Heart left ventricle (tissue), 16 donors: ENCODE measurements at regions of chr15 and their contacts with region 1.

Region 1: GRCh38 chr15:65832549-65833364 is 36.5 kb upstream of the RAB11A start:
- DNase-seq: peak; percentile 81 to 92 (median 89)
- ATAC-seq: peak; percentile 90 to 97 (median 95)
- H3K4me3 ChIP-seq: peak overlapping the region in 9 of 12 donors; percentile 9 to 50 (median 33)
- H3K27ac ChIP-seq: peak overlapping the region; percentile 72 to 92 (median 85)
- H3K4me1 ChIP-seq: peaks cover 12 to 70% (median 27%) of the 10 kb centered on the region in 12 donors
- H3K27me3 ChIP-seq: no peaks in the 10 kb centered on the region
- CTCF ChIP-seq: peak in 2 of 12 donors; percentile 27 to 28
- POLR2A ChIP-seq: no peak

Region 2: GRCh38 chr15:65869127-65869953 is 36.6 kb after region 1 on chr15 and contains the start of gene RAB11A:
- intact Hi-C with region 1: loop called in 5 of 10 experiments (anchors 1 to 5 kb)
- DNase-seq: peak; percentile 95 to 98 (median 98)
- ATAC-seq: peak; percentile 98 to 99 (median 99)
- H3K4me3 ChIP-seq: peak within 1 kb of the TSS; percentile 70 to 98 (median 88)
- H3K27ac ChIP-seq: peak within 1 kb of the TSS; percentile 86 to 97 (median 94)
- H3K4me1 ChIP-seq: peaks cover 0 to 38% (median 19%) of the 10 kb centered on the region in 12 donors
- H3K27me3 ChIP-seq: no peaks in the 10 kb centered on the region
- CTCF ChIP-seq: peak in 11 of 12 donors; percentile 6 to 67 (median 43)
- POLR2A ChIP-seq: peak; percentile 47 to 88
- total RNA-seq, gene RAB11A: 149 to 212 (median 162) TPM